Heart left ventricle (tissue), 16 donors: ENCODE measurements at regions of chr6 and their contacts with region 1.

Region 1: GRCh38 chr6:46954837-46955451 is 33.2 kb upstream of the ADGRF5 start:
- DNase-seq: peak in 2 of 5 donors; percentile 33 to 35
- ATAC-seq: peak in 2 of 4 donors; percentile 33 to 38
- H3K4me3 ChIP-seq: peak overlapping the region in 10 of 12 donors; percentile 19 to 54 (median 41)
- H3K27ac ChIP-seq: peak overlapping the region in 10 of 12 donors; percentile 36 to 89 (median 56)
- H3K4me1 ChIP-seq: peaks cover 0 to 31% (median 12%) of the 10 kb centered on the region in 12 donors
- H3K27me3 ChIP-seq: no peaks in the 10 kb centered on the region
- CTCF ChIP-seq: no peak
- POLR2A ChIP-seq: no peak

Region 2: GRCh38 chr6:46909371-46909770 is 45.6 kb before region 1 on chr6:
- intact Hi-C with region 1: loop called in 2 of 10 experiments (anchors 5 to 10 kb)
- DNase-seq: no peak
- ATAC-seq: peak; percentile 39 to 94 (median 80)
- H3K4me3 ChIP-seq: no peak overlapping the region
- H3K27ac ChIP-seq: peak overlapping the region in 10 of 12 donors; percentile 2 to 65 (median 46)
- H3K4me1 ChIP-seq: peaks cover 0 to 63% (median 25%) of the 10 kb centered on the region in 12 donors
- H3K27me3 ChIP-seq: no peaks in the 10 kb centered on the region
- CTCF ChIP-seq: peak in 1 of 12 donors; percentile 7
- POLR2A ChIP-seq: no peak